ENCODE measurements at regions of chr9 and their contacts with region 1.

Region 1: GRCh38 chr9:91111876-91112275 is 249.8 kb downstream of the AUH start:
- DNase-seq: no peak
- ATAC-seq: no peak
- H3K4me3 ChIP-seq: no peak overlapping the region
- H3K4me3 Mint-ChIP-seq: no peak overlapping the region
- H3K27ac ChIP-seq: no peak overlapping the region
- H3K27ac Mint-ChIP-seq: no peak overlapping the region
- H3K4me1 ChIP-seq: no peaks in the 10 kb centered on the region
- H3K4me1 Mint-ChIP-seq: peaks cover 3% of the 10 kb centered on the region
- H3K27me3 ChIP-seq: no peaks in the 10 kb centered on the region
- H3K27me3 Mint-ChIP-seq: peaks cover 7% of the 10 kb centered on the region
- CTCF ChIP-seq: no peak

Region 2: DNA sequence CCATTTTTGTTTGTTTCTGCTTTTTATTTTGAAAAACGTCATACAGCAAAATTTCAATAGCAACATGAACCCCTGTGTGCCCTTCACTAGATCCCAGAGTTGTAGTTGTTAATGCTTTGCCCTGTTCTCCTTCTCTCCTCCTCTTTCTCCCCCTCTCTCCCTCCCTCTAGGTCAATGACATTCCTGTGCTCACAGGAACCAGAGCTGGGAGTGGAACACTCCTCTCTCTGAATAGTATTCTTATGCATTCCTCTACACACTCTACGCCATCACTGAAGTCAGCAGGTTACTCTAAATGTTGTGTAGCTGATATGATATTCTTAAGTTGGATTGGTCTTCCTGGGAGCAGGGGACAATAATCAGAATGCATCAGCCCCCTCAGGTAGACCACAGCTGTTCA is 66.8 kb before region 1 on chr9:
- CTCF ChIA-PET with region 1: no interaction called
- POLR2A ChIA-PET with region 1: no interaction called
- intact Hi-C with region 1: loop called in 1 of 2 experiments (anchors 1 kb)
- DNase-seq: no peak
- ATAC-seq: no peak
- H3K4me3 ChIP-seq: no peak overlapping the region
- H3K4me3 Mint-ChIP-seq: no peak overlapping the region
- H3K27ac ChIP-seq: no peak overlapping the region
- H3K27ac Mint-ChIP-seq: no peak overlapping the region
- H3K4me1 ChIP-seq: peaks cover 14% of the 10 kb centered on the region
- H3K4me1 Mint-ChIP-seq: peaks cover 19% of the 10 kb centered on the region
- H3K27me3 ChIP-seq: no peaks in the 10 kb centered on the region
- H3K27me3 Mint-ChIP-seq: peaks cover 36% of the 10 kb centered on the region
- CTCF ChIP-seq: no peak

Measured in CD8-positive, alpha-beta T cell (primary cell).